ENCODE measurements at regions of chr3 and their contacts with region 1.

Region 1: DNA sequence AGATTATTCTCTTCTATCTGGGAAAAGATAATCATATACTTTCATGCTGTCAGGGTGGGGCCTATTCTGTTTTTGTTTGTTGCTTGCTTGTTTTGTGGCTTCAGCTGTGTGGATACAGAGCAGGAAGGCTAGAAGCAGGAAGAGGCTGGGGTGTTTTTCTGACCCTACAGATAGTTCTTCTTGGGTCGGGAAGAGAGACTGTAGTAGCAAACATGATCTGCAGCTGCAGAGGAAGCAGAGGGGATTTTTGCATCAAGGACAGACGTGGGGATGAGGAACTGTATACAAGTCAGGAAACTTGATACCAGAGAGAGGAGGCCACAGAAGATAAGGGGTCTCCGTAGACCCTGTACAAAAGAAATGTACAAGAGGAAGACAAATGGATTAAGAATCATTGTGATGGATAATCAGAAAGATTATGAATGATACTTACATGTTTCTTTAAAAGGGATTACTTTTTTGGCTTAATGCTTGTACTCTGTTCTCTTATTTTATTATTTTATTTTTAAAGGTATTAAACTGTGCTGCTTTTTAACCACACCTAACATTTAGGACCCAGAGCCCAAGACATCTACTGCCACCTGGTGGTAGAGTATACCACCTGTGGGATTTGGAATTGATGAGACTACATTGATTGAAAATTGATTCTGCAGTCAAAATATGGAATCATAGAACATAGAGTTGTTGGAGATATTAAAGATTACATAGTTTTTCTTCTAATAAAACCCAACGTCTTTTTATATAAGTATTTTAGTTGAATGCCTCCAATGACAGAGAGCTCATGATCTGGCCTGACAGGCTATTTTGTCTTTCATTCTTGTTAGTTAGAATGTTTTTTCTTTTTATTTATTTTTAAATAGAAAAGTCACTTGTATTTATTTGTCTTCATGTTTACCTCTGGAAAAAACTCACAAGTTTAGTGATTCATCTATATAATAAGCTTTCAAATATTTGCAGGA is 87.3 kb upstream of the ROPN1 start:
- DNase-seq: peak; percentile 50
- ATAC-seq: peak; percentile 57
- H3K4me3 ChIP-seq: no peak overlapping the region
- H3K27ac ChIP-seq: no peak overlapping the region
- H3K4me1 ChIP-seq: peaks cover 1% of the 10 kb centered on the region; the same call in 1 of the 2 replicates
- H3K27me3 ChIP-seq: no peaks in the 10 kb centered on the region; the same call in 1 of the 2 replicates
- CTCF ChIP-seq: peak; percentile 67
- POLR2A ChIP-seq: no peak
- RAD21 ChIP-seq: peak; percentile 68

Region 2: DNA sequence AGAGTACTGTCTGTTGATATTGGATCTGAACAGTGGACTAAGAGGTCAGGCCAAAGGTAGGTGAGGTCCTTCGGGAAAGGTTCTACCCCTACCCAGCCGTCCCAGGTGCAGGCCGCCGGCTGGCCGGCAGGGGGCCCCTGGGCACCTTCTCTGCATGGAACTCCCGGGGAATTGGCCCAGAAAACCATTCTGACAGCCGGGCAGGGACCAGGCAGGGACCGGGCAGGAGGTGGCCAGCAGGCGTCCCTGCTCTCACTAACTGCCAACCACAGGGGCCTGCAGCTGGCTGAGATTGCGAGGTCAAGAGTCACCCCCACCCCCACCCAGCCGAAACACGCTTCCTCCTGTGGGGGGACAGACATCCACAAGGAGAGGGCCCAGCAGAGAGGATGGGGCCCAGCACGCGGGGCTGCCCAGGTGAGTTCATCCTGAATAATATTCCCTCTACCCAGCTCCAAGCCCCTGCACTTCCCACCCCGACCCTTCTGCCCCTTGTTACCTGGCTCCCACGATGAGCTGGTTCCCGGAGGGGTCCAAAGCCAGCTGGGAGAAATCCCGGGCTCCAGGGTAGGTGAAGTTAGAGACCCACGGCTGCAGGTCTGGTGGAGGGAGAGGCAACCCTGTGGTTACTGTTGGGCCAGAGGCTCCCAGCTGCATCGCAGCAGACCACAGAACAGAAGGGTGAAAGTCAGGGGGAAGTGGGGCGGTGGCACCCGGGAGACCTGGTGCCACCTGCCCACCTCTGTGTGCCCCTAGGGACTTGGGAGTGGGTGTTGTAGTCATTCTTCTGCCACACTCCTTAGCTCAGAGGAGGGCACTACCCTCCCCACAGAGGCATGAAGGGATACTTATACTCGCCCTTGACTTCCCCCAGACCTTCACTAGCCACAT is 1136.0 kb before region 1 on chr3:
- CTCF ChIA-PET with region 1: no interaction called
- POLR2A ChIA-PET with region 1: no interaction called
- dilution Hi-C with region 1: no loop called
- in situ Hi-C with region 1: no loop called
- intact Hi-C with region 1: no loop called
- DNase-seq: peak; percentile 40
- ATAC-seq: peak; percentile 98
- H3K4me3 ChIP-seq: no peak overlapping the region
- H3K27ac ChIP-seq: no peak overlapping the region
- H3K4me1 ChIP-seq: peaks cover 1% of the 10 kb centered on the region; the same call in 1 of the 2 replicates
- H3K27me3 ChIP-seq: peaks cover 47% of the 10 kb centered on the region
- CTCF ChIP-seq: peak; percentile 90
- POLR2A ChIP-seq: no peak
- RAD21 ChIP-seq: peak; percentile 86

Region 3: GRCh38 chr3:123941121-123941520 is 138.1 kb before region 1 on chr3:
- CTCF ChIA-PET with region 1: no interaction called
- POLR2A ChIA-PET with region 1: no interaction called
- dilution Hi-C with region 1: no loop called
- in situ Hi-C with region 1: no loop called
- intact Hi-C with region 1: loop called (anchors 2 kb)
- DNase-seq: no peak
- ATAC-seq: no peak
- H3K4me3 ChIP-seq: no peak overlapping the region
- H3K27ac ChIP-seq: no peak overlapping the region
- H3K4me1 ChIP-seq: peaks cover 2% of the 10 kb centered on the region; the same call in 1 of the 2 replicates
- H3K27me3 ChIP-seq: no peaks in the 10 kb centered on the region
- CTCF ChIP-seq: peak; percentile 37
- POLR2A ChIP-seq: no peak
- RAD21 ChIP-seq: peak; percentile 48

Region 4: DNA sequence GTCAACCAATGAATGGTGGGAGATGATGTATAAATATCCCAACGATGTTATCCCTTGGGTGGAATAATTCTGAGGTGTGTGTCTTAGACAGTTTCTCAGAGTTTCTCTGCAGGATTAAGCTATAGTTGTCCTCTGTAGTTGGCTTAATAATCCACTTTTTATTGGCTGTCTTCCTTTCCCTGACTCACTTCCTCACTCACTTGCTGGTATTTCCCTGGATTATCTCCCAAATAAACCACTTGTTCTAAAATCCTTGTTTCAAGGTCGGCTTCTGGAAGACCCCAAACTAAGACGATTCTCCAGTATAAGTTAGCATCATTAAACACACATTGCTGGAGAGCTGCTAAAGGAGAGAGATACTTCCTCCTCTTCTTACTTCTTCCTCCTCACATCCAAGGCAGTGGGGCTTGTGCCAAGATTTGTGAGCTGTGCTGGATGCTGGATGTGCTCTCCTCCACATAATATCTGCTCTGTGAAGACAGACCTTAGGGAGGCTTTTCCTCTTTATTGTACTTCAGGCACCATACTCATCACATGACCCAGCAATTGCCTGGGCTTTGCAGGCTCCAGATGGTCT is 64.8 kb before region 1 on chr3:
- CTCF ChIA-PET with region 1: interaction called, 4 read pairs
- POLR2A ChIA-PET with region 1: no interaction called
- dilution Hi-C with region 1: no loop called
- in situ Hi-C with region 1: no loop called
- intact Hi-C with region 1: loop called (anchors 1 kb)
- DNase-seq: peak; percentile 17
- ATAC-seq: no peak
- H3K4me3 ChIP-seq: no peak overlapping the region
- H3K27ac ChIP-seq: no peak overlapping the region
- H3K4me1 ChIP-seq: no peaks in the 10 kb centered on the region
- H3K27me3 ChIP-seq: peaks cover 25% of the 10 kb centered on the region
- CTCF ChIP-seq: no peak
- POLR2A ChIP-seq: no peak
- RAD21 ChIP-seq: no peak